AG04450 (cell line): ENCODE measurements at regions of chr3 and their contacts with region 1.

Region 1: DNA sequence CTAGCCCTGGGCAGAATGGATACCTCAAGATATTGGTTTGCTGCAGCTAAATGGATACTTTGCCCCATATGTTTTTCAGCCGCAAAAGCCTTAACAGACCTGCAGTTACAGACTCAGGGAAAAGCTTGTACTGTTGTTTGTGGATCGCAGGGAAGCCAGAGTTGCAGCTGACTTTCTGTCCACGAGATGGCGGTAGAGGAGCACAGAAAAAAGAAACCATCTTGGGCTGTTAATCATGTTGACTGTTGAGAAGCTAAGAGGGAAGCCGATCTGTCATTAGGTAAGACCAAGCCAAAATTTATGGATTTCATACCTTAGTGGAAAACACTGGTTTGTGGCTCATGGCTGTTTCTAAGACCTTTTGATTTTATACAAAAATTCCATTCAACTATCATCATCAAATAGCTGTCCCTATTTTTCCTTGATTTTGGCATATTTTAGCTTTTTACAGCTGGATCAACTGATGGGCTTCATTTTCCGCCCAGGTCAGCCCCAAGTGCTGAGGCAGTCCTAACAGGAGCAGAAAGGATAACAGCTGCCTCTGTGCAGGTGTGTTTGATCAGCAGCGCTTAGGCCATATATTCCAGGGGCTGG is 205.7 kb upstream of the ZPLD1 start:
- DNase-seq: peak; percentile 42
- H3K4me3 ChIP-seq: no peak overlapping the region
- H3K27ac ChIP-seq: no peak overlapping the region
- H3K27me3 ChIP-seq: no peaks in the 10 kb centered on the region
- CTCF ChIP-seq: peak; percentile 98

Region 2: DNA sequence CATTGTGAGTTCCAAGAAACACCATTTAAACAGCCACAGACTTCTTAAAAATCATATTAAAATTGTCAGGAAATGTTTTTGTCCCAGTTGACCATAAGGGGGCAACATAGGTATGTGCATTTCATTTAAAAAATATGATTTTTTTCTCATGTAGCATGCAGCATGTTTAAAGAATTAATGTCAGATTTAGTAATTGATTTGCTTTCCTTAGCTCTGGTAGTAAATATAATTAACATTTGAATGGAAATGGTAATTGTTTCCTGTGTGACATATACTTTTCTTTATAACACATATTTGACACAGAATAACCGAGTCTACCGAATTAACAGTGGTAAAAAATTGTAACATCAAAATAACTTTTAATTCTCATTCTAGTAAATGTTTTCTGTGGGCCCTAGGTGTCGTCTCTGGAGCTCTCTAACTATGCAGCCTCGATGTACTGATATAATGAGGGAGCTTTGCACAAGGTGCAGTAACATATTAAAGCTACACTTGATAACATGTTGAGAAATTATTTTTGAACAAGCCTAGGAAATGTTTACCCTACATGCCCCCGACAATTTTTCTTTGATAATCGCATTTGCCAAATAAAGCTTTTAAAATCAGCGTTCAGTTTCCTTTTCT is 415.2 kb before region 1 on chr3:
- CTCF ChIA-PET with region 1: interaction called, 821 read pairs
- POLR2A ChIA-PET with region 1: interaction called, 4 read pairs
- DNase-seq: no peak
- H3K4me3 ChIP-seq: no peak overlapping the region
- H3K27ac ChIP-seq: no peak overlapping the region
- H3K27me3 ChIP-seq: no peaks in the 10 kb centered on the region
- CTCF ChIP-seq: peak; percentile 53

Region 3: GRCh38 chr3:101836652-101837598 is 392.2 kb before region 1 on chr3:
- CTCF ChIA-PET with region 1: interaction called, 25 read pairs
- POLR2A ChIA-PET with region 1: no interaction called
- DNase-seq: no peak
- H3K4me3 ChIP-seq: no peak overlapping the region
- H3K27ac ChIP-seq: no peak overlapping the region
- H3K27me3 ChIP-seq: no peaks in the 10 kb centered on the region
- CTCF ChIP-seq: no peak

Region 4: DNA sequence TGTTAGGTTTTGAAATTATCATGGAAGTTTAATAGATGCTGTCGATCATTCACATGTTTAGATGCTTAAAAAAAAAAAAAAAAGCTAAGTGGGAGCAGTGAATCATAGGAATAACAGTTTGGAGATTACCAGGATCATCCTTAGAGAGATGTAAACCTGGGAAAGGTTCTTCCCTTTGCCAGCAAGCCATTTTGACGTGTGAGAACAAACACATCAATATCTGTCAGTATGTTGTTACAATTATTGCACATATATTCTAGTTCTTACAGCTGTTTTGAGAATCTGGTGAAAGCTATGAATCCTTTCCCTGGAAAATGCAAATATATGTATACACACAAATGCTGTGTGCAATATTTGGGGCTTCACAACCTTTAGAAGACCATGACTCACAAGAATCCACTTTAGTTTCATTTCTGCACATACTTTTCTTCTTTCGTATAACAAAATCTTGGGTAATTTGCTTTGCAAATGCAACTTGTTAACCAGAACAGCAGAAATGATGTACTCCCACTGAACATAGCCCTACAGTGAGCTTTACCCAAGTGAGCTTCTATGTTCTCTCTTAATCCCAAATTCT is 367.9 kb before region 1 on chr3:
- CTCF ChIA-PET with region 1: interaction called, 11 read pairs
- POLR2A ChIA-PET with region 1: interaction called, 3 read pairs
- DNase-seq: no peak
- H3K4me3 ChIP-seq: no peak overlapping the region
- H3K27ac ChIP-seq: no peak overlapping the region
- H3K27me3 ChIP-seq: no peaks in the 10 kb centered on the region
- CTCF ChIP-seq: no peak

Region 5: DNA sequence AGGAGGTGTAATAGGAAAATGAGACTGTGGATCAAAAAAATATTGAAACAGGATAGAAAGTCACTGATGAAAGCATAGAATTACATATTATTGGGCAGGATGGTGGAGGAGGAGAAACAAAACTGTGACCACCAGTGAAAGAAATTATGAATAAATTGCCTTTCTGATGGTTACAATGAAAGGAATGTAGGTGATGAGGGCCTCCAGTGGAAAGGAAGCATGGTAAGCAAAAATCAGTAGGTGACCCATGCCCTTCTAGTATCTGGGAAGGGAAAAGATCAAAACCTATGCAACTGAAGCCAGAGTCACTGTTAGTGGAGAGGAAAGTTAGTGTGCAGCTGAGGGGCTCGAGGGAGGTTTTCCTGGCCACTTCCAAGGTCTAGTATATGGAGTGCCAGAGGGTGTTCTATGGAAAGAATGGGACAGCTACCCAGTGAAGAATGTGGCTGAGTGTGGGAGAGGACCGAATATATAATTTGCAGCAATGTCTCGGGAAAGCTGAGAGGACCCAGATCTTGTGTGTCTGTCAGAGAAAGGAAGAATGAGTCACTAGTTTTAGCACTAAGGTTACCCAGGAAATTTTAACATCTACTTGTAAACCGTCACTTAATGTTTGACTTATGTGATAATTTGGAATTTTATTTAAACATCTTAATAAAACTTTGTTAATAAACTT is 233.7 kb before region 1 on chr3:
- CTCF ChIA-PET with region 1: interaction called, 13 read pairs
- POLR2A ChIA-PET with region 1: no interaction called
- DNase-seq: no peak
- H3K4me3 ChIP-seq: no peak overlapping the region
- H3K27ac ChIP-seq: no peak overlapping the region
- H3K27me3 ChIP-seq: no peaks in the 10 kb centered on the region
- CTCF ChIP-seq: no peak

Region 6: DNA sequence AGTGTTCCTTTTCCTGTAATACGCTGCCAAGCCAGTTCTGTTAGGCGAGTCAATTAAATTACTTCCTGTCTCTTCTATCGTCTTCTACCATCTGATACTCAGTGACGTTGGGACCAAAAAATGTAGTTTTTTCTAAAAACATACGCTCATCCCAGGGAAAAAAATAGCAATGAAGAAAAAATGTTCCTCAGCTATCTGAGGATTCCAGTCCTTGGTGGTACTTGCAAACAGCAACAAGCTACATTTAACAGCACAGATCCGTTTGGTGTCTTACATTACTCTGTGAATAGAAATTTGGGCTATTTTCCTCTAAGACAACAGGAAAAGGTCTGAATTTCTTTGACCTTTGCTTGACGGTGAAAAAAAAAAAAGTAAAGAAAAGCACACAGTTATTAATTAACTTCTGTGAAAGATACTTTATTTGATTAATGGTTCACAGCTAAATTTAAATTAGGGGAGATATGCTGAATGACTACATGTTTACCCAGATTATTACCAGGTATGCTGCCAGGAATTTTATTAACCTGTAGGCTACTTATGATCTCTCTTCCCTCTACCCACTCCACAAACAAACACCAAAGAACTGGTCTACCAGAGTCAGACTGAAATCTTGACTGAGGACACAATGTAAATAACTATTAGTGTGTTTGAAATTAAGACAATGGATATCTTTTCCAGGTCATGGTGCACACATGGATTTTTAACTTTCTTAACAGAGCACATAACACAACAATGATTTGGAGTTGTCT is 48.7 kb before region 1 on chr3:
- CTCF ChIA-PET with region 1: interaction called, 17 read pairs
- POLR2A ChIA-PET with region 1: interaction called, 3 read pairs
- DNase-seq: peak; percentile 82
- H3K4me3 ChIP-seq: no peak overlapping the region
- H3K27ac ChIP-seq: peak overlapping the region; percentile 77
- H3K27me3 ChIP-seq: no peaks in the 10 kb centered on the region
- CTCF ChIP-seq: no peak

Region 7: DNA sequence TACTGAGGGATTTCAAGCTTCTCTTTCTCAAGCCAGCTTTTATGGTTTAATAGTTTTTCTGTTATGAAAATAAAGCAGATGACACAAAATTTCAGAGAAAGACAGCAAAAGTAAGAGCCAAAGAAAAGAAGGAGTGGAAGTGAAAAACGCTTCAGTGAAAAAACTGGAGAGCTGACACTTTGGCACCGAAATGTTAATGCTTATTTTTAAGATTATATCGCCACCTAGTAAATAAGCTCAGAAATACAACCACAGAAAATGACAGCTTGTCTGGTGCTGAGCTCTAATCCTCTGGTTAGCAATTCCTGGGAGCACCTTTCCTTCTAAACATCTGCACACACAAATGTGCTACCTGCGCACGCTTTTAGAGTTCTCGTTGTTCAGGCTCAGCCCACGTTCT is 307.3 kb after region 1 on chr3:
- CTCF ChIA-PET with region 1: interaction called, 366 read pairs
- POLR2A ChIA-PET with region 1: no interaction called
- DNase-seq: peak; percentile 4
- H3K4me3 ChIP-seq: no peak overlapping the region
- H3K27ac ChIP-seq: no peak overlapping the region
- H3K27me3 ChIP-seq: no peaks in the 10 kb centered on the region
- CTCF ChIP-seq: peak; percentile 48

Region 8: DNA sequence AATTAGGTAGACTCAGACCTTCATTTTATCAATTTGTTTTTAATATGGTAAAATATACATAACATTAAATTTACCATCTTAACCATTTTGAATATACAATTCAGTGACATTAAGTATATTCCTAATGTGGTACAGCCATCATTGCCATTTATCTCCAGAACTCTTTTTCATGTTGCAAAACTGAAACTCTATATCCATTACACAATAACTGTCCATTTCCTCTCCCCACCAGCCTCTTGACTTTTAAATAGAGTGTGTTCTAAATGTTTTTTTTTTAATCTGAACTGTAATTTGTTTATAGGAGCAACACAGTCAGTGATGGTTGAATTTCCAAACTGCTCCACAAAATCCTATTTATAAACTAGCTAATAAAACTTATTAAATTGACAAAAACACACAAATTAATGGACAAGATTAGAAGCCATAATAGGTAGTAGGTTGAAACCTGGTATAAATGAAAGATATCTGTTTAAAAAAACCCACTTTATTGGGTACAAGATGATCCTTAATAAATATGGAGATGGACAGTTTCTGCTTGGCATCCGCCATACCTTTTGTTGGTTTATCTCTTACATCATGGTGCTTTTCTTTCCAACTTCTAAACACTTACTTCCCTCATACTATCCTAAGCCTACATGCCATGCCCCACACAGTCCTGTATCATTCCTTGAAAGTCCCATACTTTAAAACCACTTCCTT is 348.1 kb after region 1 on chr3:
- CTCF ChIA-PET with region 1: no interaction called
- POLR2A ChIA-PET with region 1: no interaction called
- DNase-seq: no peak
- H3K4me3 ChIP-seq: no peak overlapping the region
- H3K27ac ChIP-seq: no peak overlapping the region
- H3K27me3 ChIP-seq: no peaks in the 10 kb centered on the region
- CTCF ChIP-seq: no peak